ENCODE measurements at regions of chr4 and their contacts with region 1.

Region 1: DNA sequence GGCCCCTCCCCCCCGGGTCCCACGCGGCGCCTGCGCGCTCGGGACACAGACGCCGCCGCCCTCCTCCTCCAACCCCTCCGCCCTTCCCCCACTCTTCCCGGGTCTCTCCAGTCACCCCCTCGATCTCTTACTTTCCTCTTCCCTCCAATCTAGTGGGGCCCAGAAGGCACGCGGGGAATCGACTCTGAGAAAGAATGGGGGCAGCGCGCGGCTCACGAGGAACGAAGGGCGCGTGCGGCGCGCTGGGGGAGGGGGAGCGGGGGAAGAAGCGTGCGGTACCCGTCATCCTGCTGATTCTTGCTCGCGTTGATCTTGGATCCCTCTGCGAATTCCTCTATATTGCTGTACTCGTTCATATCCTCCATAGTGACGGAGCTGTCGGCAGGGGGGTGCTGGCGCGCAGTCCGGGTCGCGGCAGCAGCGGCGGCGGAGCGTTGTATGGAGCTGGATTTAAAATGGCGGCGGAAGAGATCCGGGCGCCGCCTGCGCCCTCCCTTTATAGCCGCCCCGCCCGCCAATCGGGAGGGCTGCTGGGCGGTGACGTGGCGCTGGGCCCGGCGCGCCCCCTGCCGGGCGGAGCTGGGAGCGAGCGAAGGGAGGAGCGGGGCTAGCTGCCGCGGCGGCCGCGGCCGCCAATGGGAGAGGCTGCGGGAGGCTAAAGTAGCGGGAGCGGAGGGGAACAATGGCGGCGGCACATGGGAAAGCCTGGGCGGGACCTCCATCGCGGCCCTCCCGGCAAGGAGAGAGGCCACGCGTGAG is 1.1 kb downstream of the HNRNPDL start:
- DNase-seq: peak; percentile 87 to 96 (median 93)
- ATAC-seq: peak; percentile 62
- H3K4me3 ChIP-seq: peak overlapping the region; percentile 91 to 99
- H3K4me3 Mint-ChIP-seq: peak overlapping the region; percentile 100
- H3K27ac ChIP-seq: peak overlapping the region; percentile 99 to 100
- H3K27ac Mint-ChIP-seq: peak overlapping the region; percentile 99
- H3K4me1 ChIP-seq: peaks cover 40% of the 10 kb centered on the region
- H3K4me1 Mint-ChIP-seq: peaks cover 72% of the 10 kb centered on the region
- H3K27me3 ChIP-seq: no peaks in the 10 kb centered on the region
- H3K27me3 Mint-ChIP-seq: no peaks in the 10 kb centered on the region
- CTCF ChIP-seq: peak; percentile 90

Region 2: GRCh38 chr4:82379964-82380733 is 49.0 kb before region 1 on chr4:
- CTCF ChIA-PET with region 1: interaction called, 4 read pairs
- POLR2A ChIA-PET with region 1: interaction called, 95 read pairs
- intact Hi-C with region 1: no loop called
- DNase-seq: no peak
- ATAC-seq: no peak
- H3K4me3 ChIP-seq: no peak overlapping the region
- H3K4me3 Mint-ChIP-seq: no peak overlapping the region
- H3K27ac ChIP-seq: no peak overlapping the region
- H3K27ac Mint-ChIP-seq: no peak overlapping the region
- H3K4me1 ChIP-seq: peaks cover 11% of the 10 kb centered on the region
- H3K4me1 Mint-ChIP-seq: peaks cover 20% of the 10 kb centered on the region
- H3K27me3 ChIP-seq: no peaks in the 10 kb centered on the region
- H3K27me3 Mint-ChIP-seq: no peaks in the 10 kb centered on the region
- CTCF ChIP-seq: no peak

Region 3: DNA sequence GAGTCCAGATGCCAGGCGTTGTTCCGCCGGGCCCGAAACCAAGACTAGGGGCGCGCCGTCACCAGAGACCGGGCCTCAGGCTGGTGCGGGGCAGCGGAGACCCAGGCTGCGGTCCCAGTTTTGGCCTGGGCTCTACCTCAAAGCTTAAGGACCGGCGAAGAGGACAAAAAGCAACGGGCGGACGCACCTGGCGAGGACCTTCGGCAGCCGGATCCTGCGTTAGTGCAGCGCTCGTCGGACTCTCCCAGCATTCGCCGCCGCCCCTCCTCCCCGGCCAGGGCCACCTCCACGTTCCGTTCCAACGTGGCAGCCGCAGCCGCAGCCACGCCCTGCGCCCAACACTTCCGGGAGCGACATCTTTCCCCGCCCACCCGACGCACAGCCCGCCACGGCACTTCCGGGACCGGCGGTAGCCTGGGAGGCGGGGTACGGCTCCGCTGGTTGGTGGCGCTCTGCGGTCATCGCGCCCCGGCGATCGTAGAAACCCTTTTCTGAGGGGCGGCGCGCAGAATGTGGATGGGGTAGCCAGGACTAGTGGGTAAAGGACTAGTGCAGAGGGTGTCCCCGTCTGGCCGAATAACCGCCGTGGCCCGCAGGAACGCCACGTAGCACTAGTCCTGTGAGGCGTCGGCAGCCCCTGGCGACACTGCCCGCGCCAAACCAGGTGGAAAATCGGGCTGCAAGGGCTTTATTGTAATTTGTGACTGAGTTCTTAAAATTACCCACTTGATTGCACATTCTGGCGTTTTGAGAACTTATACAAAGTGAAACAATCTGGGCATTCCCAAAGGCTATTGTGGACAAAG is 462.0 kb after region 1 on chr4 and contains the start of gene SEC31A:
- CTCF ChIA-PET with region 1: interaction called, 3 read pairs
- POLR2A ChIA-PET with region 1: interaction called, 3 read pairs
- intact Hi-C with region 1: loop called (anchors 1 to 5 kb)
- DNase-seq: peak; percentile 93 to 99 (median 97)
- ATAC-seq: peak; percentile 93
- H3K4me3 ChIP-seq: peak within 1 kb of the TSS; percentile 87 to 88
- H3K4me3 Mint-ChIP-seq: peak within 1 kb of the TSS; percentile 89
- H3K27ac ChIP-seq: peak within 1 kb of the TSS; percentile 96
- H3K27ac Mint-ChIP-seq: peak within 1 kb of the TSS; percentile 98
- H3K4me1 ChIP-seq: peaks cover 22% of the 10 kb centered on the region
- H3K4me1 Mint-ChIP-seq: peaks cover 45% of the 10 kb centered on the region
- H3K27me3 ChIP-seq: no peaks in the 10 kb centered on the region
- H3K27me3 Mint-ChIP-seq: no peaks in the 10 kb centered on the region
- CTCF ChIP-seq: no peak
- total RNA-seq, gene SEC31A: 115 to 117 TPM

Region 4: DNA sequence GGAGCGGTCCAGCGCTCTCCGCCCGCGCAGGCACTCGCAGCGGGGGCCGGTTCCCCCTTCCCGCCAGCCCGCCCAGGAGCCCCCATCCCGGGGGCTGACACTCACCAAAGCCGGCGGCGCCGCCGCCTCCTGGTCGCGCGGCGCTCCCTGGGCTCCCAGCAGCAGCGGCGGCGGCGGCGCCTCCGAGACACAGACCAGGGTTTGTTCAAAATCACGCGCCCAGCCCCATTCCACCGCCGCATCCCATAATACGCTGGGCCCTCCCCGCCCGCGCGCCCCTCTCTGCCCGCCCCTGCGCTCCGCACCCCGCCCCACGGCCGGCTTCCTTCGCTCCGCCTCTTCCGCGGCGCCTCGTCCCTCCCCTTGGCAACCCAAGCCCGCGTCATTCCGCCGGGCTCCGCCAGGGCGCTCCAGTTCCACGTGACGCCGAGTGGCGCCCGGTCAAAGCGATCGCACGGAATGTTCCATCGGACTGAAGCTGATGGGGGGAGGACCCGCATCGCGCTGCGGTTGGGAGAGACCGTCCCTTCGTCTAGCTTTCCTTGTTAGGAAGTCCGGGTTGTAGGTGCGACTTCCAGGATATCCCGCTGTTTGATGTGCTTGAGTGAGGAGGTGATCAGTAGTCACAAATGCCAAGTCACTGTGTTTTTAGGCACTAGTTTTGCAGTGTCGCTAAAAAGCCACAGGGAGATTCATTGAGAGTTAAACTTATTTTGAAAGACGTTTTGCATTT is 583.7 kb after region 1 on chr4:
- CTCF ChIA-PET with region 1: interaction called, 3 read pairs
- POLR2A ChIA-PET with region 1: interaction called, 9 read pairs
- intact Hi-C with region 1: loop called (anchors 1 to 2 kb)
- DNase-seq: peak; percentile 94 to 98 (median 96)
- ATAC-seq: peak; percentile 88
- H3K4me3 ChIP-seq: peak overlapping the region; percentile 54 to 69
- H3K4me3 Mint-ChIP-seq: peak overlapping the region; percentile 90
- H3K27ac ChIP-seq: peak overlapping the region; percentile 56 to 95
- H3K27ac Mint-ChIP-seq: peak overlapping the region; percentile 91
- H3K4me1 ChIP-seq: peaks cover 31% of the 10 kb centered on the region
- H3K4me1 Mint-ChIP-seq: peaks cover 40% of the 10 kb centered on the region
- H3K27me3 ChIP-seq: no peaks in the 10 kb centered on the region
- H3K27me3 Mint-ChIP-seq: no peaks in the 10 kb centered on the region
- CTCF ChIP-seq: peak; percentile 65

Region 5: GRCh38 chr4:83484500-83485461 is 1055.6 kb after region 1 on chr4 and contains the start of gene ABRAXAS1:
- CTCF ChIA-PET with region 1: no interaction called
- POLR2A ChIA-PET with region 1: no interaction called
- intact Hi-C with region 1: loop called (anchors 1 to 10 kb)
- DNase-seq: peak; percentile 89 to 97 (median 94)
- ATAC-seq: peak; percentile 95
- H3K4me3 ChIP-seq: peak within 1 kb of the TSS; percentile 77 to 81
- H3K4me3 Mint-ChIP-seq: peak within 1 kb of the TSS; percentile 96
- H3K27ac ChIP-seq: peak within 1 kb of the TSS; percentile 71 to 72
- H3K27ac Mint-ChIP-seq: peak within 1 kb of the TSS; percentile 96
- H3K4me1 ChIP-seq: peaks cover 10% of the 10 kb centered on the region
- H3K4me1 Mint-ChIP-seq: peaks cover 35% of the 10 kb centered on the region
- H3K27me3 ChIP-seq: no peaks in the 10 kb centered on the region
- H3K27me3 Mint-ChIP-seq: no peaks in the 10 kb centered on the region
- CTCF ChIP-seq: no peak
- total RNA-seq, gene ABRAXAS1: 13.9 to 17.2 TPM